Adrenal gland (tissue), 19 donors: ENCODE measurements at regions of chr6 and their contacts with region 1.

Region 1: DNA sequence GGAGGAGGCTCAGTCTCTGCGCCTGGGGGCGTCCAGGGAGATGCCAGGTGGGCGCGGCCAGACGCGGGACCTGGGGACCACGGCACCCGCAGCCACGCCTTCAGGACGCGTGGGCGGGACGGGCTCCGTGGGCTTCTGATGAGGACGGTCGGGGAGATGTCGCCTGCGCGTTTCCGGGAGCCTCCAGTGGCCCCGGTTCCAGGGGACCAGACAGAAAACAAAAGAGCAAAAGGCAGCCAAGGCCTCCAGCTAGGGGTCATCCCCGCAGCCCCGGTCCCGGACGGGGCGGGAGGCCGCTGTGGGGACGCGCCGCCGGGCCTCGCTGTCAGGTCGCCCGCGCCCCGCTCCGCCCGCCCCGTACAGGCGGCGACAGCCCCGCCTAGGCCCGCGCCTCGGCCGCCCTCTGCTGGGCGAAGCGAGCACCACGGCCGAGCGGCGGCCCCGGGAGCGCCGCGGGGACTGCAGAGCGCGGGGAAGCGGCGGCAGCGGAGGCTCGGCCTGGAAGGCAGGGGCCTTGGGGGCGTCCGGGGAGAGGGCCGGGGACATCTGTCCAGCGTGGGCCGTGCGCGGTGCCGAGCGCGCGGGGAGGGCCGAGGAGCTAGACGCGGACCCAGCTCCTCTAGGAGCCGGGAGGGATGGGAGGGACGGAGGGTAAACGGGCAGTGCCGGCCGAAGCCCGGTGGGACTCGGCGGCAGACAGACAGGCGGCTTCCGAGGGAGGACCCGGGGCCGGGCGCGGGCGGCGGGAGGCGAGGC is 48.7 kb downstream of the TMEM242 start:
- DNase-seq: peak; percentile 69 to 91 (median 84)
- H3K4me3 ChIP-seq: peak overlapping the region in 3 of 4 donors; percentile 10 to 81 (median 49)
- H3K27ac ChIP-seq: peak overlapping the region in 4 of 5 donors; percentile 62 to 92 (median 76)
- H3K4me1 ChIP-seq: peaks cover 0 to 14% of the 10 kb centered on the region in 2 donors
- H3K27me3 ChIP-seq: no peaks in the 10 kb centered on the region
- CTCF ChIP-seq: peak in 3 of 6 experiments; percentile 90 to 97 (median 97)
- POLR2A ChIP-seq: peak in 1 of 2 donors; percentile 33

Region 2: GRCh38 chr6:157045831-157046454 is 228.7 kb before region 1 on chr6:
- intact Hi-C with region 1: loop called in 1 of 2 experiments (anchors 10 kb)
- DNase-seq: no peak
- H3K4me3 ChIP-seq: peak overlapping the region in 1 of 4 donors; percentile 4
- H3K27ac ChIP-seq: no peak overlapping the region
- H3K4me1 ChIP-seq: peaks cover 0 to 16% of the 10 kb centered on the region in 2 donors
- H3K27me3 ChIP-seq: no peaks in the 10 kb centered on the region
- CTCF ChIP-seq: peak; percentile 29 to 68 (median 56)
- POLR2A ChIP-seq: no peak

Region 3: DNA sequence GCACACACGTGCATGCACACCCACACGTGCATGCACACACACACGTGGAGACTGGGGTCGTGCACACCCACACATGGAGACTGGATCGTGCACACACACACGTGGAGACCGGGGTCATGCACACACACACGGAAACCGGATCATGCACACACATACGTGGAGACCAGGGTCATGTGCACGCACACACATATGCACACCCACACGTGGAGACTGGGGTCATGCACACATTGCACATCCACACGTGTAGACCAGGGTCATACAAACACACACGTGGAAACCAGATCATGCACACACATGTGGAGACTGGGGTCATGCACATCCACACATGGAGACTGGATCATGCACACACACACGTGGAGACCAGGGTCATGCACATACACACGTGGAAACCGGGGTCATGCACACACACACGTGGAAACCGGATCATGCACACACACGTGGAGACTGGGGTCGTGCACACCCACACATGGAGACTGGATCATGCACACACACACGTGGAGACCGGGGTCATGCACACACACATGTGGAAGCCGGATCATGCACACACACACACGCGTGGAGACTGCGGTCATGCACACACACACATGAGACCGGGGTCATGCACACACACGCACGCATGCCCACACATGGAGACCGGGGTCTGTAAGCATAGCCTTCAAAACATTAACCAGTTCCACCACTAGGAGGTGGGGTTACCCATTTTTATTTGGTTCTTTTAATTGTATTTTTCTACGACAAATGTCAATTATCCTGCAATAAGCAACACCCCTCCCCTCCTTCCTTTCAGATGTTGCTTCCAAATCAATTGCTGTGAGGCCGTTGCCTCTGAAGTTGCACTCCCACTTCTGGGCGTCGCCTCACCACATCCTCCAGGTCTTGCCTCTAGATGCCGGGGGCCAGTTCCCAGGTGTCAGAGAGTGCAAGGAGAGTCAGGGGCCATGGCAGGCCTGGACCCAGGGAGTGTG is 47.2 kb before region 1 on chr6:
- intact Hi-C with region 1: loop called in 1 of 2 experiments (anchors 5 kb)
- DNase-seq: peak in 2 of 7 donors; percentile 1 to 21
- H3K4me3 ChIP-seq: no peak overlapping the region
- H3K27ac ChIP-seq: no peak overlapping the region
- H3K4me1 ChIP-seq: peaks cover 12 to 20% of the 10 kb centered on the region in 2 donors
- H3K27me3 ChIP-seq: no peaks in the 10 kb centered on the region
- CTCF ChIP-seq: peak in 3 of 6 experiments; percentile 5 to 36 (median 9)
- POLR2A ChIP-seq: no peak

Region 4: GRCh38 chr6:157235600-157236039 is 39.0 kb before region 1 on chr6:
- intact Hi-C with region 1: loop called in 1 of 2 experiments (anchors 5 kb)
- DNase-seq: peak; percentile 47 to 76 (median 71)
- H3K4me3 ChIP-seq: peak overlapping the region in 3 of 4 donors; percentile 8 to 55 (median 25)
- H3K27ac ChIP-seq: peak overlapping the region in 3 of 5 donors; percentile 32 to 75 (median 36)
- H3K4me1 ChIP-seq: peaks cover 6 to 24% of the 10 kb centered on the region in 2 donors
- H3K27me3 ChIP-seq: no peaks in the 10 kb centered on the region
- CTCF ChIP-seq: peak; percentile 41 to 71 (median 58)
- POLR2A ChIP-seq: peak in 1 of 2 donors; percentile 27

Region 5: DNA sequence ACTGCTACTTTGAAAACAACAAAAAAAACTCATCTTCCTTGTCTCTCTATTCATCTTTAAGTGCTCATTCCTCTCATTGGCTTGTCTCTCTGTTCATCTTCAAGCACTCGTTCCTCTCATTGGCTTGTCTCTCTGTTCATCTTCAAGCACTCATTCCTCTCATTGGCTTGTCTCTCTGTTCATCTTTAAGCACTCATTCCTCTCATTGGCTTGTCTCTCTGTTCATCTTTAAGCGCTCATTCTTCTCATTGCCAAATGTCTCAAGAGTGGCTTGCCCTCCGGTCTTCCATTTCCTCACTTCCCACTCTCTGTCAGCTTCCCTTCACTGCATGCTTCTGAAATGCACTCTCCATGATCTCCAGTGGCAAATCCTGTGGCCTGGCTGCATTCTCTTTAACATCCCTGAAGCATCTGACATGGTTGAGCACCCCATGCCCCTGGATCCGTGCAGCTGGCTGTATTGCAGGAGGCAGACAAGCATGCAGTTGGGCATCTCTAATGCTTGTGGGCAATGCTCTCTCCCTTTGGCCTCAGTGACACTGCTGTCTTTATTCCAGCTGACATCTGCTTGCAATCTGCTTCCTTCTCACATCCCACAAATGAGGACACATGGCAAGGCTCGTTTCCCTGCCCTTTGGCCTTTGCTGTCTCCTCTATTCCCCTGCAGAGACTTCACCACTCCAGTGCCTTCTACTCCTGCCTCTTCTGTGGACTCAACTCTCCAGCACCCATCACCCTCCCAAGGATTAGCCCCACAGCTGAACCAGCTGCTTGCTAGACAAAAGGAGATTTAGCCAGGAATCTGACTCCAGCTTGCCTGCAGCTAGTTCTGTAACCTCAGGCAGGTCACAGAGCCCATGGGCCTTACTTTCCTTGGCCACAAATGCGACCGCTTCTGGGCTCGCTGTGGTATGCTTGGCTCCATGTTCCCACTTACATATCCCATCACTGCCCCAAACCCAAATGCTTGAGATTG is 405.2 kb after region 1 on chr6:
- intact Hi-C with region 1: no loop called
- DNase-seq: no peak
- H3K4me3 ChIP-seq: no peak overlapping the region
- H3K27ac ChIP-seq: no peak overlapping the region
- H3K4me1 ChIP-seq: peaks cover 0 to 6% of the 10 kb centered on the region in 2 donors
- H3K27me3 ChIP-seq: no peaks in the 10 kb centered on the region
- CTCF ChIP-seq: no peak
- POLR2A ChIP-seq: no peak

Region 6: GRCh38 chr6:158548418-158549161 is 1273.9 kb after region 1 on chr6:
- intact Hi-C with region 1: no loop called
- DNase-seq: peak in 1 of 7 donors; percentile 13
- H3K4me3 ChIP-seq: no peak overlapping the region
- H3K27ac ChIP-seq: no peak overlapping the region
- H3K4me1 ChIP-seq: no peaks in the 10 kb centered on the region
- H3K27me3 ChIP-seq: no peaks in the 10 kb centered on the region
- CTCF ChIP-seq: no peak
- POLR2A ChIP-seq: no peak